Activated CD4-positive, alpha-beta T cell treated with anti-CD3 and anti-CD28 coated beads, Interleukin-2, amount 10 ng/mL, durations not matched to agents 7 days and 5 days (primary cell): ENCODE measurements at regions of chr19 and their contacts with region 1.

Region 1: DNA sequence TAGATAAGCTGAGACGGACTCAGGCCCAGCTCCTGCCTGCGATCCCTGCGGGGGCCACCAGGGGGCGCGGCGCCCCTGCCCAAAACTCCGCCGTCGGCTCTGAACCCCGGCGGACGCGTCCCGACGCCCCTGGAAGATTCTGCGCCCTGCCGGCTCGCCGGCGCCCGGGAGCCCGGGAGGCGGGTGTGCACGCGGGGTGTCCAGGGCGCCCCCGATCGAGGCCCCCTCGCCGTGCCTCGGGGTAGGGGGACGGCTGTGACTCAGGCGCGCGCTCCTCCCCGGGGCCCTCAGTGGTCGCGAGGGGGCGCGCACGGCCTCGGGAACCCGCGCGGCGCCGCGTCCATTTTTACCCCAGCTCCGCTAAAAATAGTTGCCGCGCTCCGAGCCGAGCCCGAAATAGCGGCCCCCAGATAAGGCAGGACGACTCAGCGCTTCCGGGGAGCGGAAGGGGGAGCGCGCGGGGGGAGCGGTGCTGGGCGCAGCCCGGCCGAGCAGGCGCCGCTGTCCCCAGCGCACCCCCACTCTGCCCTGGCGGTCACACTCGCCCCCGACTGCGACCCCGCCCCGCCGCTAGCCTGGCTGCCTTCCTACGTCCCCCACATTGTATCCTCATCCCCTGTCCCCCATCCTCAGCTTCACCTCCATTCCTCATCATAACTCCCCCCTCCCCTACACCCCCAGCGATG is 16.0 kb upstream of the ERCC1 start:
- DNase-seq: peak; percentile 80
- H3K4me3 Mint-ChIP-seq: peak overlapping the region; percentile 71
- H3K27ac Mint-ChIP-seq: peak overlapping the region; percentile 78
- H3K4me1 Mint-ChIP-seq: peaks cover 34% of the 10 kb centered on the region
- H3K27me3 Mint-ChIP-seq: no peaks in the 10 kb centered on the region

Region 2: DNA sequence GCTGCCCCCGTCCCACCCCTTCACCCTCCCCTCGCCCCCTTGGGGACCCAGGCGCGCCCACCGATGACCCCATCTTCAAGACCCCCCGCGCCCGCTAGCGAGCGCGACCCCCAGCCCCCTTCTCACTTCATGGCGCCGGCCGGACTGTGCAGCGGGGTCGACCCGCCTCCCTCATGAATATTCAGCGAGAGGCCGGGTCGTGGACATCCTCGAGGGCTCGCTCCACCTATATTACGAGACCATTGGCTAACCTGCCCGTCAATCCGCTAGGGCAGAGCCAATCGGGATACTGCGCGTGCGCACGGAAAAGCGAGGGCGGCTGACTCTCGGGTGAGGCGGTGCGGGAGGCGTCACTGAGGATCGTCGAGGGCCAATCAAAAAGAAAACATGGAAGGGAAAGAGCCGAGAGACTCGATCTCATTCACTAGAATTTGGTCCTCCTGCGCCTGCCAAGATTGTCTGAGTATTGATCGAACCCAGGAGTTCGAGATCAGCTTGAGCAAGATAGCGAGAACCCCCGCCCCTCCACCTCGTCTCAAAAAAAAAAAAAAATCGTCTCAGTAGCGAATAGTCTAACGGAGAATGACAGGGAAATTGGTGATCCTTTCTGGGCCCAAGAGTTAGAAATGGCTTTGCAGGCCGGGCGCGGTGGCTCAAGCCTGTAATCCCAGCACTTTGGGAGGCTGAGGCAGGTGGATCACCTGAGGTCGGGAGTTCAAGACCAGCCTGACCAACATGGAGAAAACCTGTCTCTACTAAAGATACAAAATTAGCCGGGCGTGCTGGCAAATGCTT is 69.1 kb before region 1 on chr19 and contains the start of gene ERCC2:
- CTCF ChIA-PET with region 1: no interaction called
- POLR2A ChIA-PET with region 1: no interaction called
- DNase-seq: peak; percentile 100
- H3K4me3 Mint-ChIP-seq: peak within 1 kb of the TSS; percentile 82
- H3K27ac Mint-ChIP-seq: peak within 1 kb of the TSS; percentile 98
- H3K4me1 Mint-ChIP-seq: peaks cover 21% of the 10 kb centered on the region
- H3K27me3 Mint-ChIP-seq: no peaks in the 10 kb centered on the region
- total RNA-seq, gene ERCC2: 17.3 to 21.4 TPM

Region 3: GRCh38 chr19:45450012-45450333 is 10.3 kb after region 1 on chr19:
- CTCF ChIA-PET with region 1: interaction called, 28 read pairs
- POLR2A ChIA-PET with region 1: no interaction called
- DNase-seq: peak; percentile 28
- H3K4me3 Mint-ChIP-seq: peak overlapping the region; percentile 90
- H3K27ac Mint-ChIP-seq: peak overlapping the region; percentile 98
- H3K4me1 Mint-ChIP-seq: peaks cover 43% of the 10 kb centered on the region
- H3K27me3 Mint-ChIP-seq: no peaks in the 10 kb centered on the region

Region 4: DNA sequence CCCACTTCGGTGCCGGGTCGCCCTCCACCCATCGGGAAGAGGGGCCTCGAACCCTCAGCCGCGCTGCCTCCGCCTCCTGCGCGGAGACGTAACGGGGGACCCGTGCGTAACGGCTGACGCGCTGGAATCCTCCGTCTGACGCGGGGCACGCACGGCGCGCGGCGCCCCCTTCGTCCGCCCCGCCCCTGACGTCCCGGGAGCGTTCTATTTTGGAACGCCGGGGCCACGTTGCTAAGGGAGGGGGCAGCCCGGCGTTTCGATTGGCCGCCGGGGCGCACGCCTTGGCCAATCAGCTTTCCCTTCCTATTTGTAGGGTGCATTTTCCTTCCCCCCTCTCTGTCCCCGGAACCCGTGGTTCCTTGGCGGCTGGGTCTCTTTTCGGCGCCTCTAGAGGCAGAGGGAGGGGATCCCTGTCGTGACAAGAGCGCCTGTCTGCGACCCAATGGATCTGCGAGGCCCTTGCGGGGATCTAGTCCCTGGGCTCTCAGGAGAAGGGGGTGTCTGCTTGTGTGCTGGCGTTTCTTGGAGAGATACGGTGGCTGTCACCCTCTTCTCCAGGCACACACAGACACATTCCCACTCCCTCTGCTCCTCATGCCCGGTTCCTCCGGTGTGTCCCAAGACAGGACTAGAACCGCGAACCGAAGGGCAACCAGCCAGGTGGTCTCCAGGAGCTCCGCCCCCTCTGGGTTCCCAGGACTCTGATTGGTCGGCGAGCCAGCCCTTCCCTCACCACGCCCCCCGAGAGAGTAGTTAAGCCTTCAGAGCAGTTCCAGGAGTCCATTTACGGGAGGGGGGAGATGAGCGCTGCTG is 29.6 kb after region 1 on chr19:
- CTCF ChIA-PET with region 1: interaction called, 310 read pairs
- POLR2A ChIA-PET with region 1: interaction called, 3 read pairs
- DNase-seq: peak; percentile 94
- H3K4me3 Mint-ChIP-seq: peak overlapping the region; percentile 89
- H3K27ac Mint-ChIP-seq: peak overlapping the region; percentile 95
- H3K4me1 Mint-ChIP-seq: peaks cover 35% of the 10 kb centered on the region
- H3K27me3 Mint-ChIP-seq: peaks cover 36% of the 10 kb centered on the region

Region 5: DNA sequence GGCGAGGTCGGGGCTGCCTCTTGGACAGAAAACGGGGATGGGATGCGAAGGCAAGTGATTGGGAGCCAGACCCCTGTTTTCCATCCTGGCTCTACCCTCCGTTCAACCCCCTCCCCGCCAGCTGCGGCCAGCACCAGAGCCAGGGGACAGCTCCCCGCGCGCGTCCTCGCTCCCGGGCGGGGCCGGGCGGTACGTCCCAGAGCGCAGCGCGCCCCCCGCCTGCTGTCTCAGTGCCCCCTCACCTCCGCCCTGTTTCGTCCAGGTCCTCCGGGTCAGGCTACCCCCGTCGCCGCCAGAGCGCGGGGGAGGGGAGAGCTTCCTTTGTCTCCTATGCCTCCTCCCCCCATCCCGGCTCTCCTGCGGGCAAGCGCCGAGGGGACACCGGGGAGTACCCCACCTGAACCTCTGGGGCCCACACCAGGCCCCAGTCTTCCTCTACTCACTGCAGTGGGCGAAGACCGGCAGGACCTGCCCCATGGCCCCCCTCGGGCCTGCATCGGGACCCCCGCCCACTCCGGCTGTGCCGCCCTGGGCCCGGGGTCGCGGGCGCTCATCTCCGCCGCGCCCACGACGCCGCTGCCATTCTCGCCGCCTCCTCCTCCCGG is 56.7 kb after region 1 on chr19:
- CTCF ChIA-PET with region 1: interaction called, 13 read pairs
- POLR2A ChIA-PET with region 1: interaction called, 4 read pairs
- DNase-seq: peak; percentile 55
- H3K4me3 Mint-ChIP-seq: peak overlapping the region; percentile 50
- H3K27ac Mint-ChIP-seq: no peak overlapping the region
- H3K4me1 Mint-ChIP-seq: peaks cover 43% of the 10 kb centered on the region
- H3K27me3 Mint-ChIP-seq: peaks cover 35% of the 10 kb centered on the region